SK-N-SH (cell line): ENCODE measurements at regions of chr5 and their contacts with region 1.

Region 1: GRCh38 chr5:10856683-10857337 is 95.8 kb upstream of the DAP start:
- DNase-seq: peak; percentile 67
- H3K4me3 ChIP-seq: peak overlapping the region; percentile 28 to 37; a peak in 3 of 4 replicates
- H3K27ac ChIP-seq: no peak overlapping the region
- H3K4me1 ChIP-seq: peaks cover 0 to 3% of the 10 kb centered on the region in 2 experiments; a peak in 1 of 4 replicates
- H3K27me3 ChIP-seq: peaks cover 12% of the 10 kb centered on the region; the same call in 1 of the 2 replicates
- CTCF ChIP-seq: peak; percentile 92
- EP300 ChIP-seq: no peak
- RAD21 ChIP-seq: peak; percentile 41

Region 2: DNA sequence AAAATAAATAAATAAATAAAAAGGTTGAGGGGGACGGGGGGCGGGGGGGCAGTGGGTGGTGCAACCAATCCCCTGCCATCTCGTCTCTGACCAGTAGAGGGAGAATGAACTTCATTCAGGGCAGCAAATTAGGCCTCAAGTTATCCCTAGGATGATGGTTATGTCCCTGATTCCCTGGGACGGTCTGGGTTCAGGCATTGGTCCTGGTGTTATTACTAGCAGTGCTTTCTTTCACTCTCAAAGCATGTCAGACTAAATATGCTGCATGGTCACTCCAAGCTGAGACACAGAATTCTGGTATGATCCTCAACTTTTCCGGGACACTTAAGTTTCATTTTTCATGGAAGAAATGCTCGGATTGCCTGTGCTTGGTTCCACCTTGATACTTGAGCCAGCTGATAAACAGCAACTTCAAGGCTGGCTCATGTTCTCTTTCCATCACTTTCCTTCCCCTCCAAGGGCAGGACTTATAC is 155.2 kb before region 1 on chr5:
- CTCF ChIA-PET with region 1: interaction called, 14 read pairs
- POLR2A ChIA-PET with region 1: no interaction called
- DNase-seq: peak; percentile 76
- H3K4me3 ChIP-seq: no peak overlapping the region
- H3K27ac ChIP-seq: peak overlapping the region in 1 of 2 experiments; percentile 57; a peak in 2 of 4 replicates
- H3K4me1 ChIP-seq: peaks cover 24 to 34% of the 10 kb centered on the region in 2 experiments; a peak in 3 of 4 replicates
- H3K27me3 ChIP-seq: no peaks in the 10 kb centered on the region
- CTCF ChIP-seq: peak; percentile 61
- EP300 ChIP-seq: no peak
- RAD21 ChIP-seq: peak; percentile 54

Region 3: GRCh38 chr5:10838038-10838437 is 18.8 kb before region 1 on chr5:
- CTCF ChIA-PET with region 1: interaction called, 20 read pairs
- POLR2A ChIA-PET with region 1: no interaction called
- DNase-seq: no peak
- H3K4me3 ChIP-seq: no peak overlapping the region
- H3K27ac ChIP-seq: no peak overlapping the region
- H3K4me1 ChIP-seq: no peaks in the 10 kb centered on the region
- H3K27me3 ChIP-seq: no peaks in the 10 kb centered on the region; the same call in 1 of the 2 replicates
- CTCF ChIP-seq: no peak
- EP300 ChIP-seq: no peak
- RAD21 ChIP-seq: no peak

Region 4: DNA sequence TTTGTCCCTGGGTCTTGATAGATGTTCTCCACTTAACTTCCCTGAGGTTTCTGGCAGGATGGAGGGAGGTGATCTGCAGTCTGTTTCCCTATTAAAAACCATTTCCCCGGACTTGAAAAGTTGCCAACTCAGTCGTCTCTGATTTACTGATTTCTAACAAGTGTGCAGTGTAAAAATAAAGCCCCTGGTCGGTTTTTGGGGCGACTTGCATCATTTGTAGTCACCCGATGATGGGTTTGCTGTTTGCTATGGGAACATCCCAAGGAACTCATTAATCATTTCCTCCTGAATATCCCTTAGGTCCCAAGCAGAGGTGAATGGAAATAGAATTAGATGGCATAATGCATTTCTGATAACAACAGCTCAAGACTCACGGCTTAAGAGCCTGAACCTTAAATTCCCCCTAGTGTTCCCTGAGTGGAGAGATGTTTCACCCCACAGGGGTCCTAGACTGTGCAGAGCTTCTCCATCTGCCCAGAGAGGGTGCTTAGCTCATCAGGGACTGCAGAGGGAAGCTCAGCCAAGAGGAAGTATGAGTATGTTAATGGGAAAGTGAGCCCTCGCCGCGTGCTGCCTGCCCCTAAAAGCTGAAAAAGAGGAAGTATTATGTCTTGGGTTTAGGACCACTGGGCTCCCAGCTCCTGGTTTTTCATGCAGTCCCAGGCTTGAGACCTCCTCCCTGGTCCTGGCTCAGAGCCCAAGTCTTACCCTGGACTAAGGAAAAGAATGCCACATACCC is 19.4 kb after region 1 on chr5:
- CTCF ChIA-PET with region 1: interaction called, 16 read pairs
- POLR2A ChIA-PET with region 1: no interaction called
- DNase-seq: no peak
- H3K4me3 ChIP-seq: no peak overlapping the region
- H3K27ac ChIP-seq: no peak overlapping the region
- H3K4me1 ChIP-seq: peaks cover 0 to 5% of the 10 kb centered on the region in 2 experiments; a peak in 2 of 4 replicates
- H3K27me3 ChIP-seq: no peaks in the 10 kb centered on the region
- CTCF ChIP-seq: no peak
- EP300 ChIP-seq: no peak
- RAD21 ChIP-seq: no peak